Adrenal gland (tissue), 19 donors: ENCODE measurements at regions of chr2 and their contacts with region 1.

Region 1: DNA sequence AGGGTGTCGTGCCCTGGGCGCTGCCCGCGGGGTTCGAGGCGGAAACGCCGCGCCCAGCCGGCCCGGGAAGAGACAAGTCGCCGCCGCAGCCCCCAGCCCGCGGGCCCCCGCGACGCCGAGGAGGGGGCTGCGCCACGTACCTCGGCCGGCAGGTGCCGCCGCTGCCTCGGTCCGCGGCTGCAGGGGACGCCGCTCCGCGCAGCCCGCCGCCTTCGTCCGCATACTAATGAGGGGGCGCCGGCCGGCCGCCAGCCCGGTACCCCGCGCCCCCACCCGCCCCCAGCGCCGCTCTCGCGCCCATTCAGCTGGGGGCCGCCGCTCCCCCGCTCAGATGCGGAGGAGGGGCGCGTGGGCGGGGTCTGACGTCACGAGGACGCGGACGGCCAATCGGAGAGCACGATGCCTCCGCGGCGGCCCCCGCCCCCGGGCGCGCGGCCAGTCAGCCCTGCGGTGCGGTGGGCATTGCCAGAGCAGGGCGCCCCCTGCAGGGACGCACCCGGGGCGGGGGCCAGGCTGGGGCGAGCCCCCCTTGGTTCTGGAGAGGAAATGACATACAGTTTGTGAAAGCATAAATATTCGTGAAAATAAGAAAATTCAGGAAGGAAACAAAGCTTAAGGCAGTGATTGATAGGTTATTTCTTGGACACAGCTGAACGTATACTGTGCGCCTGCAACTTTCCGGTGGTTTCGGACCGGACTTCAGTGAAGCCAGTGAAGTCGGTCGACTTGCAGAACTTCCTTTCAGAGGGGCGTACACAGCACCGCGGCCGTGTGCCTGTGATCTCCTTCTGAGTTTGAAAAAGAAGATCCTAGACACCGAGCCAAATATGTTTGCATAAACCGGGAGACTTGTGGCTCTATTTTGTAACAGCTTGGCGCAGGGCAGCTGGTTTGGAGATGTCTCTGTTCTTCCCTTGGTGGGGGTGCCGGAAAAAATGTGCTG is at the start of gene ST3GAL5:
- DNase-seq: peak; percentile 91 to 96 (median 93)
- H3K4me3 ChIP-seq: peak within 1 kb of the TSS; percentile 31 to 98 (median 64)
- H3K27ac ChIP-seq: peak within 1 kb of the TSS; percentile 84 to 99 (median 95)
- H3K4me1 ChIP-seq: peaks cover 54 to 75% of the 10 kb centered on the region in 2 donors
- H3K27me3 ChIP-seq: no peaks in the 10 kb centered on the region
- CTCF ChIP-seq: peak; percentile 9 to 69 (median 58)
- POLR2A ChIP-seq: peak; percentile 45 to 91
- total RNA-seq, gene ST3GAL5: 25.6 to 172 (median 89.2) TPM

Region 2: DNA sequence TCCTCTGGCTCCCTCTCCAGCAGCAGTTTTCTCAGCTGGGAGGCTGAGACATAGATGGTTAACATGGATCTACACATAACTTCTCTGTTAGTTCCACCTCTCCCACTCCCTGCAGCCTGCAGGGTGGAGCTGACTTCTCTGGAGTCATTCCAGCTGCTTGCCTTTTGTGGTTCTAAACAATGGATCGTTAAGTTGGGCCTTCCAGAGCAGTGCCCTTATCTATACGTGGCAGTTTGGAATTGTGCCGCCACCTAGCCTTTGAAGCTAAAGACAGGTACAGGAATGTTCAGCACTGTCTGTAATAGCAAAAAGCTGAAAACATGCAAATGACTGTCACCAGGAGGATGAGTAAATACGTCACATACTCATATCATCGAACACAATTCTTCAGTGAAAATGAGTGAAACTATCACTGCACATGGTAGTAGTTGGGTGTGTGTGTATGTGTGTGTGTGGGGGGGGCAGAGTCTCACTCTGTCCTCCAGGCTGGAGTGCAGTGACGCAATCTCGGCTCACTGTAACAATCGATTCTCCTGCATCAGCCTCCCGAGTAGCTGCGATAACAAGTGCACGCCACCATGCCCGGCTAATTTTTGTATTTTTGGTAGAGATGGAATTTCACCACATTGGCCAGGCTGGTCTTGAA is 420.1 kb before region 1 on chr2:
- intact Hi-C with region 1: no loop called
- DNase-seq: no peak
- H3K4me3 ChIP-seq: no peak overlapping the region
- H3K27ac ChIP-seq: no peak overlapping the region
- H3K4me1 ChIP-seq: peaks cover 4 to 11% of the 10 kb centered on the region in 2 donors
- H3K27me3 ChIP-seq: no peaks in the 10 kb centered on the region
- CTCF ChIP-seq: no peak
- POLR2A ChIP-seq: no peak

Region 3: DNA sequence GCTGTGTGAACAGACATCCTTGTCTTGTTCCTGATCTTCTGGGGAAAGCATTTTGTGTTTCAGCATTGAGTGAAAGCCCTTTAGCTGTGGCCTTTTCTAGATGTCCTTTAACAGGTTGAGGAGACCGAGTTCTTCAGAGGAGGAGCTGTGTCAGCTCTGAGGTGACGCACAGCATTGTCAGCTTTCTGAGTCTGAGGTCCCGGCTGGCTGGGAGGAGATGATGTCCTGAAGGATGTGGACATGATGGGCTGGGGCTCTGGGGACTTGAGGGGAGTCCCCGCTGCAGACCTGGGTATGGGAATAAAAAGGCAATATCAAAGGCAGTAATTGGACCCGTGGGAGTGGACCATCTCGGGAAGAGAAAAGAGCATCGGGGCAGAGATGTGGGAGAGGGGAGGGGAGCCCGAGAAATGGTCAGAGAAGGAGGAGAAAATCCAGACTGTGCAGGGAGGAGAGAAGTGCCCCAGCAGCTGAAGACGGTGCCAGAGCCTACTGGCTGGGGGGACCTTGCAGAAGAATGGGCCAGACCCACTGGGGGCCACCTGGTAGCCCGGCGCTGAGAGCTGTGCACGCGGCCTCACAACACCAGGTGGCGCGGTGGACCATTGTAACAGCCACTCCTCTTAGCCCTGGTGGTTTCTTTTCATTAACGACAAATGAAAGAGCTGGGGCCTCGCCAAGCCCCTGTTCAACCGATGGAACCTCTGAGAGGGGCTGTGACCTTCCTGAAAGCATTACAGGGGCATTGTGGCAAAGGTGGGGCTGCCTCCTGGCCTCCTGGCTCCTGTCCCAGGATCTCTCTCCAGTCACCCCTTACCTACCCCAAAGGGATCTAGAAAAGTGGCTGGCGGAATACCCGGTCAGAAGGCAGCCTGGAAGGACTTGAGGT is 61.7 kb before region 1 on chr2:
- intact Hi-C with region 1: loop called in 1 of 2 experiments (anchors 10 kb)
- DNase-seq: peak; percentile 64 to 93 (median 84)
- H3K4me3 ChIP-seq: peak overlapping the region in 1 of 4 donors; percentile 49
- H3K27ac ChIP-seq: no peak overlapping the region
- H3K4me1 ChIP-seq: peaks cover 0 to 3% of the 10 kb centered on the region in 2 donors
- H3K27me3 ChIP-seq: no peaks in the 10 kb centered on the region
- CTCF ChIP-seq: peak; percentile 85 to 98 (median 94)
- POLR2A ChIP-seq: no peak

Region 4: GRCh38 chr2:85846411-85846810 is 42.5 kb before region 1 on chr2:
- intact Hi-C with region 1: loop called in 1 of 2 experiments (anchors 5 kb)
- DNase-seq: no peak
- H3K4me3 ChIP-seq: no peak overlapping the region
- H3K27ac ChIP-seq: peak overlapping the region in 2 of 5 donors; percentile 31 to 41
- H3K4me1 ChIP-seq: peaks cover 0 to 12% of the 10 kb centered on the region in 2 donors
- H3K27me3 ChIP-seq: no peaks in the 10 kb centered on the region
- CTCF ChIP-seq: no peak
- POLR2A ChIP-seq: no peak